Aorta (tissue), 5 donors: ENCODE measurements at regions of chr2 and their contacts with region 1.

Region 1: DNA sequence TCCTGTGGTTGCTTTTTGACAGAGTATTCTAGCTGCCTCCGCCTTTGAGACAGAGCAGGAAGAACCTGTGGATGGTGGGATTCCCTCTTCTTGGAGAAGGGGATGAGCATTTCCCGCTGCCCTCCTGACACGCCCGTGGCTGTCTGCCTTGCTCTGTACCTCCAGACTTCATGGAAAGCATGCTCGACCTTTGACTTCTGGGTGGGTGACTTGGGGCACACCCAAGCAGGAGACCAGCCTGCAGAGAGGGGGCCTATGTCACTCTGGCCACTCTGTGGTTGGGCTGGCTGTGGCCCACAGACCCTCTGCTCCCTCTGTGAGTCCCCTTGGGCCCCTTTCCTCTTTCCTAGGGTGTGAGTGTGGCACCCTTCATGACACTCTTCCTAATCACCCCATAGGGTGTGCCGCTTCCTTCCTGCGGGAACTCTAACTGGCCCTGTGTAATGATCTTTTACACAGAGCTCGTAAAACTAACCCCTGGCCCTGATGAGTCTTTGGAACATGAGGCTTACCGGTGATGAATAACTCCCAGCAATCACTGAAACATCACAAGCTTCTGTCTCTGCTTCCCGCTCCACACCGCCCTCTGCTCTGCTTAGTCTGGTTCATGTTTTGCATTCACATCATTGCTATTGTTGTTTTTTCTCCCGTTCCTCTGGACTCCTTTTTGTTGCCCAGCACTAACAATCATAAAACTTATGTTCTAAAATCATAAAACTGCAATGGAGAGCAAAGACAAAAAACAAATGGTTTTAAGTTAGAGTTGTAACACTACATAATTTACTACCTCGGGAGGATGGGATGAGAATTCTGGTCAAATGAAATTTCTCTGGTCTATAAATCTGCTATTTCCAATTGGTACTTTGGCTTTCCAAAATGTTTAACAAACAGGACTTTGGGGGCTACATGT is 101.1 kb downstream of the SH3YL1 start:
- DNase-seq: no peak
- ATAC-seq: no peak
- H3K4me3 ChIP-seq: no peak overlapping the region
- H3K27ac ChIP-seq: no peak overlapping the region
- H3K4me1 ChIP-seq: no peaks in the 10 kb centered on the region
- H3K27me3 ChIP-seq: no peaks in the 10 kb centered on the region

Region 2: GRCh38 chr2:216068-216467 is 53.3 kb after region 1 on chr2:
- intact Hi-C with region 1: loop called in 1 of 2 experiments (anchors 5 kb)
- DNase-seq: no peak
- ATAC-seq: no peak
- H3K4me3 ChIP-seq: no peak overlapping the region
- H3K27ac ChIP-seq: no peak overlapping the region
- H3K4me1 ChIP-seq: no peaks in the 10 kb centered on the region
- H3K27me3 ChIP-seq: peaks cover 0 to 2% of the 10 kb centered on the region in 2 donors